CD4-positive, alpha-beta T cell (primary cell): ENCODE measurements at regions of chr6 and their contacts with region 1.

Region 1: DNA sequence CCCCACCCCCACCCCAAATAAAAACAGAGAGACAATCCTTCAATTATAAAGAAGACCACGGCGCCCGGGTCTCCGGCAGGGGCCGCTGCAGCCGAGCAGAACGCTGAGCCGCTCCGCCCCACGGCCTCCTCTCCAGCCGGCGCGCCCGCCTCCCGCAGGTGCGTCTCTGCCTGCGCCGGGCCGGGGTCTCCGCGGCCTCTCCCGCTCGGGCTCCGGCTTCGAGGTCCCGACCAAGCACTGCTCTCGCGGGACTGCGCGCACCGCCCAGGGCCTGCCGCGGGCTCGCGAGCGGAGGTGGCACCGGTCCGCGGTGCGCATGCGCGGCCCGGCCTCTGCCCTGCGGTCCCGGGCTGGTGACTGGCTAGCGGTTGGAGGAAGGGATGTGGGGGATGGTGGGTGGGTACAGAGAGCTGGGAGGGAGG is 241 bp upstream of the SIRT5 start:
- DNase-seq: peak; percentile 85 to 98 (median 91)
- ATAC-seq: peak; percentile 79
- H3K4me3 ChIP-seq: peak overlapping the region; percentile 97
- H3K4me3 Mint-ChIP-seq: peak overlapping the region; percentile 98
- H3K27ac ChIP-seq: peak overlapping the region; percentile 82 to 86
- H3K27ac Mint-ChIP-seq: peak overlapping the region; percentile 99
- H3K4me1 ChIP-seq: peaks cover 14% of the 10 kb centered on the region
- H3K4me1 Mint-ChIP-seq: peaks cover 34% of the 10 kb centered on the region
- H3K27me3 ChIP-seq: no peaks in the 10 kb centered on the region
- H3K27me3 Mint-ChIP-seq: no peaks in the 10 kb centered on the region
- CTCF ChIP-seq: peak; percentile 72

Region 2: GRCh38 chr6:13307508-13307995 is 266.6 kb before region 1 on chr6:
- CTCF ChIA-PET with region 1: no interaction called
- POLR2A ChIA-PET with region 1: no interaction called
- intact Hi-C with region 1: no loop called
- DNase-seq: peak in 3 of 14 experiments; percentile 9 to 64 (median 56)
- ATAC-seq: no peak
- H3K4me3 ChIP-seq: no peak overlapping the region
- H3K4me3 Mint-ChIP-seq: no peak overlapping the region
- H3K27ac ChIP-seq: no peak overlapping the region
- H3K27ac Mint-ChIP-seq: no peak overlapping the region
- H3K4me1 ChIP-seq: peaks cover 9% of the 10 kb centered on the region
- H3K4me1 Mint-ChIP-seq: peaks cover 18% of the 10 kb centered on the region
- H3K27me3 ChIP-seq: no peaks in the 10 kb centered on the region
- H3K27me3 Mint-ChIP-seq: no peaks in the 10 kb centered on the region
- CTCF ChIP-seq: no peak

Region 3: GRCh38 chr6:13328076-13328874 is 245.9 kb before region 1 on chr6 and contains the start of gene TBC1D7:
- CTCF ChIA-PET with region 1: interaction called, 9 read pairs
- POLR2A ChIA-PET with region 1: interaction called, 27 read pairs
- intact Hi-C with region 1: loop called (anchors 2 to 10 kb)
- DNase-seq: peak; percentile 85 to 97 (median 92)
- ATAC-seq: peak; percentile 87
- H3K4me3 ChIP-seq: peak within 1 kb of the TSS; percentile 91
- H3K4me3 Mint-ChIP-seq: peak within 1 kb of the TSS; percentile 97
- H3K27ac ChIP-seq: peak within 1 kb of the TSS; percentile 88 to 95
- H3K27ac Mint-ChIP-seq: peak within 1 kb of the TSS; percentile 99
- H3K4me1 ChIP-seq: peaks cover 13% of the 10 kb centered on the region
- H3K4me1 Mint-ChIP-seq: peaks cover 38% of the 10 kb centered on the region
- H3K27me3 ChIP-seq: no peaks in the 10 kb centered on the region
- H3K27me3 Mint-ChIP-seq: no peaks in the 10 kb centered on the region
- CTCF ChIP-seq: no peak
- total RNA-seq, gene TBC1D7: 10.2 to 12.3 TPM

Region 4: GRCh38 chr6:13487122-13488014 is 86.8 kb before region 1 on chr6 and contains the start of gene GFOD1:
- CTCF ChIA-PET with region 1: interaction called, 3 read pairs
- POLR2A ChIA-PET with region 1: interaction called, 7 read pairs
- intact Hi-C with region 1: loop called in 1 of 2 experiments (anchors 1 kb)
- DNase-seq: peak; percentile 28 to 86 (median 61)
- ATAC-seq: peak; percentile 76
- H3K4me3 ChIP-seq: peak within 1 kb of the TSS; percentile 67
- H3K4me3 Mint-ChIP-seq: peak within 1 kb of the TSS; percentile 94
- H3K27ac ChIP-seq: no peak within 1 kb of the TSS
- H3K27ac Mint-ChIP-seq: peak within 1 kb of the TSS; percentile 66
- H3K4me1 ChIP-seq: peaks cover 25% of the 10 kb centered on the region
- H3K4me1 Mint-ChIP-seq: peaks cover 29% of the 10 kb centered on the region
- H3K27me3 ChIP-seq: peaks cover 0 to 5% of the 10 kb centered on the region in 2 experiments
- H3K27me3 Mint-ChIP-seq: peaks cover 9% of the 10 kb centered on the region
- CTCF ChIP-seq: no peak
- total RNA-seq, gene GFOD1: 1.3 to 2.0 TPM

Region 5: DNA sequence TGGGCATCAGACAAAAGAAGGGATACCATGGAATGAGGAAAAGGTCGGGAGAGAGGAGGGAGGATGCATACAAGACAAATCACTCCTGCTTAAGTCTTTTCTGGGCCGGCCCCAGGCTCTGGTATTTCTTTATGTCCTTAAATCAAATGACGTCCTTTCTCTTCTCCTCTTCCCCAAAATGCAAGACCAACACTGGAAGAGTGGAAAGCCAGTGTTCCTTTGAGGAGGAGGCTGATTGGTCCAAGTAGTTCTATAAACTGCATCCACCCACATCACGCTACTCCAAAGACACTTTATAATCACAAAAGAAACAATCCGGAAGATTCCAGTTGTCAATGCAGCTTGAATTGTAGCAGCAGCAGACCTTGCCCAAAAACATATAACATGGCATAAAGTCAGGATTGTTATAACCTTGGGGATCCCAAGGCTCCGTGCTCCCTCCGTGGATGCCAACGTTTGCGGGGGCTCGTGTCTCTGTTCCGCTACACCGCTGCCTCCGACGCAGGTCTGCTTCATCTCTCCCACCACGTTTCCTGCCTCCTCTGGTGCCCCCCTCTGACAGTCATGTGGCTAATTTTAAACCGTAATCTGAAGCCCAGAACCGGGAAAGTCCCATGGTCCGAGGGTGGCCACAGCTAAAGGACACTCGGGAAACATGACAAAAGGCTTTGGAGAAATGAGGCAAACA is 193.1 kb after region 1 on chr6:
- CTCF ChIA-PET with region 1: interaction called, 7 read pairs
- POLR2A ChIA-PET with region 1: interaction called, 7 read pairs
- intact Hi-C with region 1: loop called in 1 of 2 experiments (anchors 2 kb)
- DNase-seq: peak; percentile 12 to 67 (median 38)
- ATAC-seq: peak; percentile 51
- H3K4me3 ChIP-seq: peak overlapping the region; percentile 24
- H3K4me3 Mint-ChIP-seq: peak overlapping the region; percentile 44
- H3K27ac ChIP-seq: no peak overlapping the region
- H3K27ac Mint-ChIP-seq: no peak overlapping the region
- H3K4me1 ChIP-seq: peaks cover 26% of the 10 kb centered on the region
- H3K4me1 Mint-ChIP-seq: peaks cover 38% of the 10 kb centered on the region
- H3K27me3 ChIP-seq: no peaks in the 10 kb centered on the region
- H3K27me3 Mint-ChIP-seq: no peaks in the 10 kb centered on the region
- CTCF ChIP-seq: peak; percentile 55

Region 6: DNA sequence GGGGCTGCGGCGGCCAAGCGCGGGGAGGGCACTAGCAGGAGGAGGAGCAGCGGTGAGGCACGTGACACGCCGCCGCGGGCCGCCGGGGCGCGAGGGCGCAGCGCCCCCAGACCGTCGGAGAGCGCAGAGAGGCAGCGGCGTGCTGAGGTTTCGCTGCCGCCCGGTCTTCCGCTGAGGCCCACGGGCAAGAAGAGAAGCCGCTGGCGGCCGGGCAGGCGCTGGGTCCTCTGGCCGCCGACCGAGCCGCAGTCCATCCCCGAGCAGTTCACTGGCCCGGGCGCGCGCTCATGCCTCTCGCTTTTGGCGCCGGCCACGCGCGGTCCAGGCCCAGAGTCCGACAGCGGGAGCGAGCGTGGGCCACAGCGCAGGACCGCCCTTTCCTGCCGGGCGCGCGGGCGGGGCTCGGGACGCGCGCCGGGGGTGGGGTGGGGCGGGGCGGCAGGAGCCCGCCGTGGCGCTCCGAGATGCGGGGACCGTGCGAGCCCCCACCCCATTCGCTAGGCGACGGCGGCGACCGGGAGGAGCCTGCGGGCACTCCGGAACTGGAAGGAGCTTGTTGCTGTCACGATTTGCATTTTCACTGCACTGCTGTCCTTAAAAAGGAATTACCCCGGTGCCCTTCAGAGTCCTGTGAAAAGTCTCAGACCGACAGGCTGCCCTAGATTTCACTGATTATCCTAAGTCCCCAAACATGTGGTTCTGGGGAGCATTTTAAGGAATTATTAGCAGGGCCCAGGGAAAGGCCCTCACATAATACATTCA is 240.2 kb after region 1 on chr6 and contains the start of gene MCUR1:
- CTCF ChIA-PET with region 1: interaction called, 14 read pairs
- POLR2A ChIA-PET with region 1: interaction called, 17 read pairs
- intact Hi-C with region 1: loop called in 1 of 2 experiments (anchors 5 kb)
- DNase-seq: peak; percentile 54 to 94 (median 73)
- ATAC-seq: peak; percentile 83
- H3K4me3 ChIP-seq: peak within 1 kb of the TSS; percentile 70
- H3K4me3 Mint-ChIP-seq: peak within 1 kb of the TSS; percentile 90
- H3K27ac ChIP-seq: peak within 1 kb of the TSS; percentile 72 to 80
- H3K27ac Mint-ChIP-seq: peak within 1 kb of the TSS; percentile 86
- H3K4me1 ChIP-seq: peaks cover 18% of the 10 kb centered on the region
- H3K4me1 Mint-ChIP-seq: peaks cover 37% of the 10 kb centered on the region
- H3K27me3 ChIP-seq: no peaks in the 10 kb centered on the region
- H3K27me3 Mint-ChIP-seq: no peaks in the 10 kb centered on the region
- CTCF ChIP-seq: peak; percentile 20
- total RNA-seq, gene MCUR1: 3.2 to 4.5 TPM

Region 7: GRCh38 chr6:14550822-14551221 is 976.7 kb after region 1 on chr6:
- CTCF ChIA-PET with region 1: no interaction called
- POLR2A ChIA-PET with region 1: no interaction called
- intact Hi-C with region 1: no loop called
- DNase-seq: no peak
- ATAC-seq: no peak
- H3K4me3 ChIP-seq: no peak overlapping the region
- H3K4me3 Mint-ChIP-seq: no peak overlapping the region
- H3K27ac ChIP-seq: no peak overlapping the region
- H3K27ac Mint-ChIP-seq: no peak overlapping the region
- H3K4me1 ChIP-seq: no peaks in the 10 kb centered on the region
- H3K4me1 Mint-ChIP-seq: no peaks in the 10 kb centered on the region
- H3K27me3 ChIP-seq: no peaks in the 10 kb centered on the region
- H3K27me3 Mint-ChIP-seq: no peaks in the 10 kb centered on the region
- CTCF ChIP-seq: no peak